GM12878 (cell line): ENCODE measurements at regions of chr19 and their contacts with region 1.

Region 1: DNA sequence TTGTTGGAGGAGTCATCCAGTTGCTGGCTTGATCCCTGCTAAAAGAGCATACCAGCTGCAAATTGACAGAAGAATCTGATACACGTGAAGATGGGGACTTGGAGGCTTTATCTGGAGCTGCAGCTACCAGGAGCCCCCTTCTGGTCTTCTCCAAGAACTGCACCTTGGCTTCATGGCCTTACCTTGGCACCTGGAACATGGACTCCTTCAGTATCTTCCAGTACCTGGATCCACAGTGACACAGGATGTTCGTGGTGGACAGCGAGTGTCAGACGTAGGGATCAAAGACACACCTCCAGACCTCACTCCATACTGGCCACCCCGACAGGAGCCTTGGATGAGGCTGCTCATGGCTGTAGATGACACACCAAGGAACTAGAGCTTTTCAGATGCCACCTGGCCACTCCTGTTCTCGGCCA is 9.9 kb upstream of the ACSBG2 start:
- DNase-seq: peak; percentile 40
- ATAC-seq: peak; percentile 95
- H3K4me3 ChIP-seq: no peak overlapping the region
- H3K27ac ChIP-seq: no peak overlapping the region
- H3K4me1 ChIP-seq: peaks cover 6% of the 10 kb centered on the region; the same call in 1 of the 2 replicates
- H3K27me3 ChIP-seq: no peaks in the 10 kb centered on the region
- CTCF ChIP-seq: peak; percentile 95 to 96 (median 95)
- EP300 ChIP-seq: no peak
- POLR2A ChIP-seq: no peak
- RAD21 ChIP-seq: peak; percentile 91

Region 2: GRCh38 chr19:5967994-5968430 is 157.6 kb before region 1 on chr19:
- CTCF ChIA-PET with region 1: interaction called, 11 read pairs
- POLR2A ChIA-PET with region 1: no interaction called
- RAD21 ChIA-PET with region 1: interaction called, 6 read pairs
- SMC1A ChIA-PET with region 1: interaction called, 5 read pairs
- in situ Hi-C with region 1: no loop called
- intact Hi-C with region 1: no loop called
- DNase-seq: peak; percentile 17
- ATAC-seq: peak; percentile 91
- H3K4me3 ChIP-seq: no peak overlapping the region
- H3K27ac ChIP-seq: peak overlapping the region; percentile 53
- H3K4me1 ChIP-seq: peaks cover 12% of the 10 kb centered on the region
- H3K27me3 ChIP-seq: no peaks in the 10 kb centered on the region
- CTCF ChIP-seq: peak; percentile 80 to 92 (median 82)
- EP300 ChIP-seq: 0 out of 4 replicates have a peak, but pooled peaks of 1 of the 2 experiments have one; percentile 21
- POLR2A ChIP-seq: no peak
- RAD21 ChIP-seq: peak; percentile 73

Region 3: GRCh38 chr19:6021878-6022569 is 103.6 kb before region 1 on chr19:
- CTCF ChIA-PET with region 1: interaction called, 4 read pairs
- POLR2A ChIA-PET with region 1: no interaction called
- RAD21 ChIA-PET with region 1: interaction called, 10 read pairs
- SMC1A ChIA-PET with region 1: no interaction called
- in situ Hi-C with region 1: no loop called
- intact Hi-C with region 1: no loop called
- DNase-seq: peak; percentile 17
- ATAC-seq: peak; percentile 99
- H3K4me3 ChIP-seq: no peak overlapping the region
- H3K27ac ChIP-seq: no peak overlapping the region
- H3K4me1 ChIP-seq: no peaks in the 10 kb centered on the region
- H3K27me3 ChIP-seq: 0 out of 4 replicates have a peak, but pooled peaks cover 0 to 2% of the 10 kb centered on the region in 2 experiments
- CTCF ChIP-seq: peak; percentile 69 to 87 (median 71)
- EP300 ChIP-seq: no peak
- POLR2A ChIP-seq: no peak
- RAD21 ChIP-seq: peak; percentile 82

Region 4: DNA sequence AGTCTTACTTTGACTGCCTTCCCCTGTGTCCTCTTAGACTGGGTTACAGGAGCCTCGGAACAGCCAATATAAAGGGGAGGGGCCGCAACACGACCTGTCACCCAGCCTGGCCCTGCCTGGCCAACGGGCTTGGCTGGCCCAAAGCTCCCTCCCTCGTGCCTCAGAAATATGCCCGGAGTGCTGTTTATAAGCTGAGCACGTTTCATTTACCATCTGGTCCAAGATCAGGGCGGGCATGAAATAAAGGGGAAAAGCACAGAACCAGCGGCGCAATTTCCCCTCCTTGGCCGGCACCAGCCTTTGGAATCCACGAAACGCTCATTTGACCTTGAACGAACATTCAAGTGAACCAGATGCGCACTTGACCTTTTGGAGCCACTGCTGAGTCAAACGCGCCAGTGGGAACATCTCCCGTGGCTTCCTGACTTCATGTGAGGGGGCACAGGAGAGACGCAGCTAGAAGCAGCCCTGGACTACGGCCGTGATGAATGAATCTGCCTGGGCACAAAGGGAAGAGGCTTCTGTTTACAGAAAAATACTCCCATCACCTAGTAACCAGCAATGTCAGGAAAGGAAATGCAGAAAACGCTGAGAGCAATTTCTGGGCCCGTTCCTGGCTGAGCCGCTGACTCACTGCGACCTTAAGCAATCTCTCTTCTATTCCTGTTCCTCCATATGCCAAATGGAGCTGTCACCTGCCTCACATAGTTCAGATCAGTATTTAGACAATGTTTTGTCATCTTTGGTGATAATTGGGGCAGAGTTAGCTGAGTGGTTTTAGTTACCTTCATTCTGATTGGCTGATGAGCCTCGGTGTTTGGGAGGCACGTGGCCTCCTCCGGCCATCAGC is 68.6 kb before region 1 on chr19:
- CTCF ChIA-PET with region 1: interaction called, 95 read pairs
- POLR2A ChIA-PET with region 1: interaction called, 3 read pairs
- RAD21 ChIA-PET with region 1: interaction called, 52 read pairs
- SMC1A ChIA-PET with region 1: interaction called, 68 read pairs
- in situ Hi-C with region 1: loop called (anchors 5 kb)
- intact Hi-C with region 1: no loop called
- DNase-seq: no peak
- ATAC-seq: no peak
- H3K4me3 ChIP-seq: no peak overlapping the region
- H3K27ac ChIP-seq: no peak overlapping the region
- H3K4me1 ChIP-seq: no peaks in the 10 kb centered on the region
- H3K27me3 ChIP-seq: no peaks in the 10 kb centered on the region
- CTCF ChIP-seq: no peak
- EP300 ChIP-seq: no peak
- POLR2A ChIP-seq: no peak
- RAD21 ChIP-seq: no peak

Region 5: DNA sequence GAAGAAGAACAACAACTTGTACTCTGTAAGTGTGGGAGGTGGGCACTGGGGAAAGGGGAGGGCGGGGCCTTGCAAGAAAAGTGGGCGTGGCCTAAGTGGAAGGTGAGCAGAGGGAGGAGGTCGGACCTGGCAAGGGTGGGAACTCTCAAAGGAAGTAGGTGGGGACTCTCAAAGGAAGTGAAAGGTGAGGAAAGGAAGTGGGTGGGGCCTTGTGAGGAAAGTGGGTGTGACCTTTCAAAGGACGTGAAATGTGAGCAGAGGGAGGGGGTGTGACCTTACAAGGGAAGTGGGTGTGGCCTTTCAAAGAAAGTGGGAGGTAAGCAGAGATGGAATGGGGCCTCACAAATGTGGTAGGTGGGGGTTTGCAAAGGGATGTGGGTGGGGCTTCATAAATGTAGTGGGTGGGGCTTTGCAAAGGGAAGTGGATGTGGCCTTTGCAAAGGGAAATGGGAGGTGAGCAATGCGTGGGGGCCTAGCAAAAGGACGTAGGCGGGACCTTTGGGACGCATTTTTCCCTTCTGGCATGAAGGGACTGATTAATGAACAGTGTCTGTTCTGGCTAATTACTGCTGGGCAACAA is 35.8 kb after region 1 on chr19:
- CTCF ChIA-PET with region 1: interaction called, 10 read pairs
- POLR2A ChIA-PET with region 1: no interaction called
- RAD21 ChIA-PET with region 1: no interaction called
- SMC1A ChIA-PET with region 1: interaction called, 7 read pairs
- in situ Hi-C with region 1: no loop called
- intact Hi-C with region 1: loop called (anchors 5 kb)
- DNase-seq: peak; percentile 52
- ATAC-seq: peak; percentile 71
- H3K4me3 ChIP-seq: no peak overlapping the region
- H3K27ac ChIP-seq: no peak overlapping the region
- H3K4me1 ChIP-seq: no peaks in the 10 kb centered on the region
- H3K27me3 ChIP-seq: no peaks in the 10 kb centered on the region
- CTCF ChIP-seq: no peak
- EP300 ChIP-seq: no peak
- POLR2A ChIP-seq: no peak
- RAD21 ChIP-seq: no peak

Region 6: GRCh38 chr19:6297202-6297601 is 171.6 kb after region 1 on chr19:
- CTCF ChIA-PET with region 1: interaction called, 31 read pairs
- POLR2A ChIA-PET with region 1: no interaction called
- RAD21 ChIA-PET with region 1: interaction called, 20 read pairs
- SMC1A ChIA-PET with region 1: interaction called, 16 read pairs
- in situ Hi-C with region 1: no loop called
- intact Hi-C with region 1: loop called (anchors 1 kb)
- DNase-seq: no peak
- ATAC-seq: no peak
- H3K4me3 ChIP-seq: no peak overlapping the region
- H3K27ac ChIP-seq: no peak overlapping the region
- H3K4me1 ChIP-seq: no peaks in the 10 kb centered on the region
- H3K27me3 ChIP-seq: no peaks in the 10 kb centered on the region
- CTCF ChIP-seq: no peak
- EP300 ChIP-seq: no peak
- POLR2A ChIP-seq: no peak
- RAD21 ChIP-seq: no peak

Region 7: GRCh38 chr19:6862673-6863078 is 737.1 kb after region 1 on chr19:
- CTCF ChIA-PET with region 1: interaction called, 25 read pairs
- POLR2A ChIA-PET with region 1: no interaction called
- RAD21 ChIA-PET with region 1: interaction called, 24 read pairs
- SMC1A ChIA-PET with region 1: interaction called, 24 read pairs
- in situ Hi-C with region 1: no loop called
- intact Hi-C with region 1: no loop called
- DNase-seq: peak; percentile 80
- ATAC-seq: peak; percentile 94
- H3K4me3 ChIP-seq: peak overlapping the region; percentile 67; the same call in 1 of the 2 replicates
- H3K27ac ChIP-seq: peak overlapping the region; percentile 56; the same call in 1 of the 2 replicates
- H3K4me1 ChIP-seq: peaks cover 11% of the 10 kb centered on the region
- H3K27me3 ChIP-seq: no peaks in the 10 kb centered on the region
- CTCF ChIP-seq: peak; percentile 92 to 99 (median 99); a peak in 5 of 6 replicates
- EP300 ChIP-seq: no peak
- POLR2A ChIP-seq: peak; percentile 65
- RAD21 ChIP-seq: peak; percentile 88